Prostate gland (tissue), 2 donors: ENCODE measurements at regions of chr17 and their contacts with region 1.

Region 1: GRCh38 chr17:82917691-82918345 is 78.0 kb upstream of the ZNF750 start:
- DNase-seq: no peak
- H3K4me3 ChIP-seq: no peak overlapping the region
- H3K27ac ChIP-seq: no peak overlapping the region
- H3K4me1 ChIP-seq: no peaks in the 10 kb centered on the region
- H3K27me3 ChIP-seq: no peaks in the 10 kb centered on the region
- CTCF ChIP-seq: peak in 3 of 4 experiments; percentile 13 to 42 (median 35)
- POLR2A ChIP-seq: no peak

Region 2: DNA sequence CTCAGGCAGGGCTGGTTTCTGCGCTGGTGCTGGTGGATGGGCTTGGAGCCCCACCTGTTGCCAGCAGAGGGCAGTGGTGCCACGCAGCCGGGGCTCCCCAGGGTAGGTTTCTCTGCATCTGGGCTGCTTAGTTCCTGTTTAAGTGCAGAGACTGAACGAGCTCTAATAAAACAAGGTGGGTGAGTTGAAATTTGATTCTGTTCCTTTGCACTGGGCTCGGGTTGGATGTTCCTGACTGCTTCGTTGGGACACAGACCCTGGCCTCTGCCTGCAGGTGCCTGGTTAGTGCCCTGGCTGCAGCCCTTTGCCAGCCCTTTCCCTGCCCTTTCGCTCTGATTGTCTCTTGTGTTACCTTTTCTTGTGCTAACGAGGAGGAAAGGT is 135.9 kb before region 1 on chr17:
- intact Hi-C with region 1: loop called (anchors 5 kb)
- DNase-seq: peak; percentile 86
- H3K4me3 ChIP-seq: no peak overlapping the region
- H3K27ac ChIP-seq: peak overlapping the region; percentile 8 to 35
- H3K4me1 ChIP-seq: peaks cover under 1% of the 10 kb centered on the region
- H3K27me3 ChIP-seq: no peaks in the 10 kb centered on the region
- CTCF ChIP-seq: peak; percentile 98 to 99 (median 99)
- POLR2A ChIP-seq: peak; percentile 37

Region 3: GRCh38 chr17:82892899-82893565 is 24.8 kb before region 1 on chr17:
- intact Hi-C with region 1: no loop called
- DNase-seq: no peak
- H3K4me3 ChIP-seq: no peak overlapping the region
- H3K27ac ChIP-seq: peak overlapping the region; percentile 36 to 41
- H3K4me1 ChIP-seq: peaks cover 27% of the 10 kb centered on the region
- H3K27me3 ChIP-seq: no peaks in the 10 kb centered on the region
- CTCF ChIP-seq: no peak
- POLR2A ChIP-seq: no peak